Activated CD8-positive, alpha-beta T cell treated with anti-CD3 and anti-CD28 coated beads for 36 hours (primary cell): ENCODE measurements at regions of chr11 and their contacts with region 1.

Region 1: DNA sequence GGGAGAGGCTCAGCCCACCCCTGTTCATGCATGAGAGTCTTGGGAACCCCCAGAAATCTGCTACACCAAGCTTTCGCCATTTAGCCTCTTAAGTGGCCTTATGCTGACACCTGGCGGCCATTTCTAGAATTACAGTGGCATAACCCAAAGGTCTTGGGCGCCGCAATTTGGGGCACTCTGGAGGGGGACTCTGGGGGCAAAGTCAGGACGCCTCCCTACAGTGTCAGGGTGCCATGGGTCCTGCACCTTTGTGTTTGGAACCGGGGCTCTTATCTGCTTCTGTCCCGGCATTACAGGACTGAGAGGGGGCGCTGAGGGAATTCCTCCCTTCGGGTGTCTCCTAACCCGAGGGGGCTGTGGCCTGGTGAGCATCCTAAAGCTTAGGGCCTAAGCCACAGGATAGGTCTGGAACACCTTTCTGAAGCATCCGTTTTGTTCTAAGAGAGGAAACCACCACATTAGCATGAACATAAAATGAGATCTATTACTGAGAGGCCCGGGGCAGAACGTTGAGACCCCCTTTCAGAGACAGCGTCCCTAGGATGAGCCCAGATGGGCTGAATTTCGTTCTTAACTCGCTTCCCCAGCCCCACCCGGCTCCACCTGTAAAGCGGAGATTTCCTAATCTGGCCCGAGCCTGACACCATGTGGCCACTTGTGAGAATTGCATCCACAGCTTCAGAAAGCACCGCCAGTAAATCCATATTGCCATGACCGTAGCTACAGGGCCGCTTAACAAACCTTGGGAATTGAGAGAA is 9.3 kb downstream of the INS start:
- DNase-seq: peak; percentile 91
- ATAC-seq: peak; percentile 82
- H3K4me3 Mint-ChIP-seq: no peak overlapping the region
- H3K27ac Mint-ChIP-seq: no peak overlapping the region
- H3K4me1 Mint-ChIP-seq: peaks cover 10% of the 10 kb centered on the region
- H3K27me3 Mint-ChIP-seq: peaks cover 36% of the 10 kb centered on the region
- CTCF ChIP-seq: peak; percentile 86

Region 2: DNA sequence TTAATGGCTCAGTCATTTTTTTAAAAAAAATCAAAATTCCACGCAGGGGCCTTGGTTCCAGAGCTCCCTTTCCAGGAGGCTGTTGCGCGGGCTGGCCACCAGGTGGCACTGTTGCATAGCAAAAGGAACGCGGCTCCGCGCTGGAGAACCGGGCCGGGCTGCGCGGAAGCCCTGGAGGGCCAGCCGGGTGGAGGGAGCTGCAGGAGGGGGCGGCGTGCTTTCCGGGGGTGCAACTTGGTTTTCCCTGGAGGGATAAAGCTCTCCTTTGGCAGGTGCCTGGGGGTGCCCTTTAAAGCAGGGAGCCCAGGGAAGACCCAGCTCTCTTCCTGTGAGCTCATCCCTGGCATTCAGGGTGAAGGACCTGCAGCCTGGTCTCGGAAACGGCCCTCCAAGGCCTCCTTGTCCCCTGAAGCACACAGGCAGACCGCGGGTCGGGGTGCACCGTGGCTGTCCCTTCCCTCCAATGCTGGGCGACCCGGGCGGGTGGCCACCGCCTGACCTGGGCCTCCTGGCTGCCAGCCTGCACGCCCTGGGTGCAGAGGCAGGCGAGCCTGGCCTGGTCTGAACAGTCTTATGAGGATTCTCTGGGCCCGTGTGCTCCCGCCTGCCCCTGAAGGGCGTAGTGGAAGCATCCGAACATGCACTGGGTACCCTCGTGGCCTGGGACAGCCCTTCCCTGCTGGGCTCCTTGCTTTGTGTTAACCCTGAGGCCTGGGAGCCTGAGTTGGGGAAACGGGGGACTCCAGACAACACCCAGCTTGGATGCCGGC is 498.7 kb before region 1 on chr11:
- CTCF ChIA-PET with region 1: interaction called, 15 read pairs
- POLR2A ChIA-PET with region 1: no interaction called
- intact Hi-C with region 1: no loop called
- DNase-seq: peak; percentile 74
- ATAC-seq: peak; percentile 89
- H3K4me3 Mint-ChIP-seq: no peak overlapping the region
- H3K27ac Mint-ChIP-seq: no peak overlapping the region
- H3K4me1 Mint-ChIP-seq: no peaks in the 10 kb centered on the region
- H3K27me3 Mint-ChIP-seq: peaks cover 14% of the 10 kb centered on the region
- CTCF ChIP-seq: peak; percentile 94

Region 3: DNA sequence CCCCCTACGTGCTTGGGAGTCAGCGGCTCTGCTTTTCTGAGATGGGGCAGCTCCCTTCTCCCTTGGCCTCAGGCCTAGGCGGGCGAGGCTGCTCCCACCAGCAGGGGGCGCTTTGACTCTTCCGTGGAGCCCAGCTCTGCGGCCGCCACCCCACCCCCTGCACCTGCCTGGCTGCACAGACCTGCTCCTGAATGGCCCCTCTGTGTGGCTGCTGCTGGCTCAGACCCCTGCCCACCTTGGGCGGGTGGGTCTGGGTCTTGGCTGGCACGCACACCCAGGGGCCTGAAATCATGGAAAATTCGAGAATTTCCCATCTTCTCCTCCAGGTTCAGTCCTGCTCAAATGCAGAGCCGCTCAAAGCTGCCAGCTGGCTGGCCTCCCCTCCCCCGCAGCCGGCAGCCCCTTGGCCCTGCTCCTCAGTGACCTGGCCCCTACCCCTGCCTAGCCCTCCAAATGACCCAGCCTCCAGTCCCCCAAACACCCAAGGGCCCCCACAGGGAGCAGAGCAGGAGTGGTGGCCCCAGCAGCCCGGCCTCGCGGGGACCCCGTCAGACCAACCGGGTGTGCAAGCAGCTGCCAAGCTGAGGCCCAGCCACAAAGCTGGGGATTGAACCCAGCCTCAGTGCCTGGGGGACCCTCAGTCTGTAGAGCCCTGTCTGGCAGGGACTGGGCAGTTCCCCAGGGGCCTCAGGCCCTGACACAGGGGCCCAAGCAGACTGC is 269.0 kb before region 1 on chr11:
- CTCF ChIA-PET with region 1: interaction called, 32 read pairs
- POLR2A ChIA-PET with region 1: no interaction called
- intact Hi-C with region 1: loop called (anchors 10 kb)
- DNase-seq: peak; percentile 87
- ATAC-seq: peak; percentile 89
- H3K4me3 Mint-ChIP-seq: no peak overlapping the region
- H3K27ac Mint-ChIP-seq: no peak overlapping the region
- H3K4me1 Mint-ChIP-seq: peaks cover 5% of the 10 kb centered on the region
- H3K27me3 Mint-ChIP-seq: no peaks in the 10 kb centered on the region
- CTCF ChIP-seq: peak; percentile 78

Region 4: DNA sequence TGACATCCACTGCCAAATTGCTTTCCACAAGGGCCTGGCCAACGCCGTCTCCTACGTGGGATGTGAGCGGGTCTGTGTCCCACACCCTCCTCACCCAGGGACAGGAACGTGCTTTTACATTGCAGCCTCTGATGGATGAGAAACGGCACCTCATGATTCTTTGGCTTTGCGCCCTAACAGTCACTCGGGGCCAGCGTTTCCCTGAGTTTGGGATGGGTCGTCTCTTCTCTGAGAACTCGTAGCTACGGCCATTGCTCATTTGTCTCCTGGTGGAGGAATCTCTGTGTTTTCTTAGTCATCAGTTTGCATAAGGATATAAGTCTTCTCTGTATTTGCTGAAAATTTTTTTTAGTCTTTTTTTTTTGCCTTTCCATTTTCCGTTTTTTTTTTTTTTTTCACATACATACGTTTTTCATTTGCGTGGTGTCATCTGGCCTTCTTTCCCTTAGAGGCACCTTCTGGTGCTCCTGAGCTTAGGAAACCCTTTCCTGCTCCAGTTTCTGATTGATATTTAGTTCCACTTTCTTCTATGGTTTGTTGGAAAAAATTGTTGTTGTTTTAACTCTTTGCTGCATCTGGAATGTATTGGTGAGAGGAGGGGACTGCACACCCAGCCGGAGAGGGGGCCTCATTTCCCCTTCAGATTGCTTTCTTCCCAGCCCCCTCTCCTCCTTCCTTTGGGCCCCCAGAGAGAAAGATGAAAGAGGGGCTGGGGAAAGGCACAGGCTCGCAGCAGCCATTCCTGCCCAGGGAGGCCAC is 220.2 kb before region 1 on chr11:
- CTCF ChIA-PET with region 1: no interaction called
- POLR2A ChIA-PET with region 1: no interaction called
- intact Hi-C with region 1: no loop called
- DNase-seq: no peak
- ATAC-seq: no peak
- H3K4me3 Mint-ChIP-seq: no peak overlapping the region
- H3K27ac Mint-ChIP-seq: no peak overlapping the region
- H3K4me1 Mint-ChIP-seq: peaks cover 2% of the 10 kb centered on the region
- H3K27me3 Mint-ChIP-seq: no peaks in the 10 kb centered on the region
- CTCF ChIP-seq: no peak

Region 5: DNA sequence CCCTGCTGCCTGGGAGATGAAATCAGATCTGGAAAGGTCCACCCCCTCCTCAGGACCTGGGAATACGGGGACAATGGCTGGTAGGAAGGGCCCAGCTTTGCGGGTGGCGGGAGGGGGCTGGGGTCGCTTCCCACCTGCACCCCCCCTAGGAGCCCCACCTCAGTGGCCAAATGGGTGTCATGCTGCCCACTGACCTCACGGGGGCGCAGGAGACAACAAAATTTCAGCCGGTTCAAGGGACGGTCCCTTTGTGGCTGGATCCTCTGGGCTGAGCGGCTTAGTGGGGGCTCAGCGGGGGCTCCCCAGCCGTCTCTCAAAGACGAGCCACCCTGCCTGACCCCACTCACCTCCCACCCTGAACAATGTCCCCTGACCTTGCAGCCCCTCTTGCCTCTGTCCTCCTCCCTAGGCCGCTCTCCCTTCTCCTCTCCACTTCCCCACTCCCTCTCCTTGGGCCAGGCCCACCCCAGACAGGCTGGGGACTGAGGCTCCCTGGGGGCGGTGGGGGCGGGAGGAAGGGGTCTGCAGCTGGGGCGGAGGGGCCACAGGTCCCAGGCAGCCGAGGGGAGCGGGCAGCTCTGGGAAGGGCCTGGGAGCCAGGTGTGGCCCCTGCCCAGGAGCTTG is 114.7 kb before region 1 on chr11:
- CTCF ChIA-PET with region 1: interaction called, 518 read pairs
- POLR2A ChIA-PET with region 1: interaction called, 31 read pairs
- intact Hi-C with region 1: no loop called
- DNase-seq: no peak
- ATAC-seq: peak; percentile 79
- H3K4me3 Mint-ChIP-seq: no peak overlapping the region
- H3K27ac Mint-ChIP-seq: no peak overlapping the region
- H3K4me1 Mint-ChIP-seq: no peaks in the 10 kb centered on the region
- H3K27me3 Mint-ChIP-seq: no peaks in the 10 kb centered on the region
- CTCF ChIP-seq: no peak

Region 6: GRCh38 chr11:2099516-2100340 is 52.0 kb before region 1 on chr11:
- CTCF ChIA-PET with region 1: interaction called, 19 read pairs
- POLR2A ChIA-PET with region 1: no interaction called
- intact Hi-C with region 1: no loop called
- DNase-seq: no peak
- ATAC-seq: peak; percentile 17
- H3K4me3 Mint-ChIP-seq: no peak overlapping the region
- H3K27ac Mint-ChIP-seq: no peak overlapping the region
- H3K4me1 Mint-ChIP-seq: peaks cover 3% of the 10 kb centered on the region
- H3K27me3 Mint-ChIP-seq: peaks cover 3% of the 10 kb centered on the region
- CTCF ChIP-seq: no peak

Region 7: GRCh38 chr11:2163428-2163978 is 11.8 kb after region 1 on chr11:
- CTCF ChIA-PET with region 1: interaction called, 11 read pairs
- POLR2A ChIA-PET with region 1: no interaction called
- intact Hi-C with region 1: no loop called
- DNase-seq: no peak
- ATAC-seq: no peak
- H3K4me3 Mint-ChIP-seq: no peak overlapping the region
- H3K27ac Mint-ChIP-seq: no peak overlapping the region
- H3K4me1 Mint-ChIP-seq: no peaks in the 10 kb centered on the region
- H3K27me3 Mint-ChIP-seq: peaks cover 5% of the 10 kb centered on the region
- CTCF ChIP-seq: no peak